Pancreas (tissue), 10 donors: ENCODE measurements at regions of chr15 and their contacts with region 1.

Region 1: GRCh38 chr15:99068186-99068585 is 36.7 kb upstream of the SYNM start:
- DNase-seq: no peak
- ATAC-seq: no peak
- H3K4me3 ChIP-seq: no peak overlapping the region
- H3K27ac ChIP-seq: no peak overlapping the region
- H3K4me1 ChIP-seq: no peaks in the 10 kb centered on the region
- H3K27me3 ChIP-seq: no peaks in the 10 kb centered on the region
- CTCF ChIP-seq: no peak

Region 2: DNA sequence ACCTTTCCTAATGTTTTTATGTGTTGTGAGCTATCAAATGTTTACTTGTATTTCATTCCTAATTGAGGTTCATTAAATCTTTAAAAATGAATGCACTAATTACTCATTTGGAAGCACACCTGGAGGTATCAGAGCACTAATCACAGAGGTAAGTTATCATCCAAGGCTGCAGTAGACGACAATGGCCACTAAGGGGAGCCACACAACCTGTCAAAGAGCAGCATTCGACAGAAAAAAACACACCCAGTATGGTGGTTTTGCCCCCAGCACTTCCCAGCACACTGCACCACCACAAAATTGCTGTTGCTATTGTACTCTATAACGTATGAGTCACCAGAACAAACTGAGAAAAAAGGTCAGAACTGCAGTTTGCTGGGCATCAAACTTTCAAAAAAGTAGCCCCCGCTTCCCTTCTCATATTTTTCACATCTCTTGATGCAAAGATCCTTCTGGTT is 625.8 kb before region 1 on chr15:
- intact Hi-C with region 1: loop called in 2 of 3 experiments (anchors 10 kb)
- DNase-seq: peak in 3 of 6 donors; percentile 39 to 66 (median 64)
- ATAC-seq: peak; percentile 67 to 96 (median 92)
- H3K4me3 ChIP-seq: no peak overlapping the region
- H3K27ac ChIP-seq: no peak overlapping the region
- H3K4me1 ChIP-seq: no peaks in the 10 kb centered on the region
- H3K27me3 ChIP-seq: no peaks in the 10 kb centered on the region
- CTCF ChIP-seq: peak; percentile 44 to 84 (median 74)

Region 3: GRCh38 chr15:98518823-98519561 is 549.2 kb before region 1 on chr15:
- intact Hi-C with region 1: loop called in 1 of 3 experiments (anchors 10 kb)
- DNase-seq: peak in 4 of 6 donors; percentile 26 to 54 (median 44)
- ATAC-seq: peak; percentile 73 to 87 (median 86)
- H3K4me3 ChIP-seq: no peak overlapping the region
- H3K27ac ChIP-seq: no peak overlapping the region
- H3K4me1 ChIP-seq: peaks cover 0 to 6% (median 3%) of the 10 kb centered on the region in 3 donors
- H3K27me3 ChIP-seq: no peaks in the 10 kb centered on the region
- CTCF ChIP-seq: peak; percentile 76 to 89 (median 79)